Left colon (tissue), 2 donors: ENCODE measurements at regions of chr3 and their contacts with region 1.

Region 1: DNA sequence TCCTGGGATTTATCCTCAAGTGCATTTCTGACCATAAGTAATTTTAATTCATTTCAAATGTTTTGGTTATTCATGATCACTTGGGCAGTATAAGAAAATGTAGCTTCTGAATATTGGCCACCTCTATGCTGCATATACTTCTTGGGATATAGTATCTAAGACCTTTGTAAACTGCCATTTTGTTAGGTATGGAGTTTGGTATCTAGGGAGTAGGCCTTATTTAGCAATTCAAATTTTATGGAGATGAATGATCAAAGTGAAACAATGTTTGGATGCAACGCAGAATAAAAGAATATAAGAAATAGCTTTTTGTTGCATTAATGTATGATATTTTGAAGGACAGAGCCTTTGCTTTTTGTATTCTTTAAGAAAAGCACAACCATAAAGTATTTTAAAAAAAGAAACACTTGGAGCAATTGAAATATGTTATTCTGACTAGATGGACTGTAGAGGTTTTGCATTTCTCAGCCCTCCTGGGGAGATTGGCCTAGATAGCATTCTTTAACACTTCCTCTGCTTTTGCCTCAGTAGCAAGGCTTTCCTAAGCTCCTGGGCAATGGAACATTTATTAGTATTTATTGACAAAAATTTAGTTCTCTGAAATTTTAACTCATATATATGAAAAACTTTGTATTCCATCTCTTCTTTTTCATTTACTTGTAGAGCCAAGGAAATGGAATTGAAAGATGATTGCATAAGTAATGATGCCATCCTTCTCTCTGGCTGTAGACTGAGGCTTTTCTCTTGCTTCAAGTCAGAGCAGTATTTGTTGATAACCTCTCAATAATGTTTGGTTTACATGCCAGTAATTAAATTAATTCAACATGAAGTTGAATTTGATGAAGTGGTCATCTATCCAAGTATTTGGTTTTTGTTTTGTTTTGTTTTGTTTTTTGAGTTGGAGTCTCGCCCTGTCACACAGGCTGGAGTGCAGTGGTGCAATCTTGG is 61.8 kb upstream of the UTS2B start:
- DNase-seq: no peak
- ATAC-seq: no peak

Region 2: DNA sequence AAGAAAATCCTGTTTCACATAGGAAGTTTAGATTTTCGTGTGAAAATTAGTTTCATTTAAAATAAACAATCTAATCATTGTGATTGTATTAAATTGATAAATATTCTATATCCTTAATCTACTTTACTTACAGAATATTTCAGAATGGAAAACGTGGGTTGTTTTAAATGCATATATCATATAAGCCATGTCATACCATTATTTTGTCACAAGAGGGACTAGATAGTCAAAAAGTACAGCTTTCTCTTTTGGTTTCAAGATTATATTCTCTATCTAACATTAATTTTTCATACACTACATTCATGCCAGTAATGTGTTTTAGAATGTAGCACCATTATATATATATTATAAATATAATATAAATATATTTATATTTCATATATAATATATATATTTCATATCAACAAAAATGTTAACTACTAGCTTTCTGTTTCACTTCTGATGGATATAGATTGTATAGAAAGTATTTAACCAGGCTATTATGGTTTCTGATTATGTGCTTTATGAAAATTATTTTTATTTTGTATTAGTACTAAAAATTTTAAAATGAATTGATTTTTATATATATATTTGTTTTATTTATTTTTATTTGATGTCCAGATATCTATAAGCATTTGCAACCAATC is 147.8 kb before region 1 on chr3:
- intact Hi-C with region 1: loop called in 1 of 2 experiments (anchors 10 kb)
- DNase-seq: no peak
- ATAC-seq: peak; percentile 38